HEK293T (cell line): ENCODE measurements at regions of chr19 and their contacts with region 1.

Region 1: DNA sequence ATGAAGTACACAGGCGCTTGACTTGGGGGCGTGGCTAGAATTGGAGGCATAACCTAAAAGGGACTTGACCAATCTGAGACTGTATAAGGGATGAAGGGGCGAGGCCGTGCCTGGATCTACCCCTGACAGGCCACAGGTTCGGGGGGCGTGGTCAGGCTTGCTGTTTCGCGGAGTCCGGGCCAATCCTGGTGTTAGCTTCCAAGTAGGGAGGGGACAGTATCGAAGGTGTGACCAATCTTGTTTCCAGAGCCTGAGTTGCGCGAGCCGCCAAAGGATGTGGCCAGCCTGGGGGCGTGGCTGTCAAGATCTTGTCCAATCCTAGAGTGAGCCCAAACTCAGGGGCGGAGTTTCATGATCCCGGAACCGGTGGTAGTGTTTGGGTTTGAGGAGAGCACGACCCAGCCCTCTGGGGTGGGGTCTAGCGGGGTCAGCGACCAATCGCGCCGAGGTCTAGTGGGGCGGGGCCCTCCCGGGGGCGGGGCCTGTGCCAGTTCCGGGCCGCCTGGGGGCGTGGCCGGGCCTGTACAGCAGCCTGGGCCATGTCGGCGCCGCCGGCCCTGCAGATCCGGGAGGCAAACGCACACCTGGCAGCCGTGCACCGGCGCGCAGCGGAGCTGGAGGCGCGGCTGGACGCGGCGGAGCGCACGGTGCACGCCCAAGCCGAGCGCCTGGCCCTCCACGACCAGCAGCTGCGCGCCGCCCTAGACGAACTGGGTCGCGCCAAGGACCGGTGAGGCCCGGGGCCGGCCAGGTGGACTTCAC is at the start of gene VMAC:
- DNase-seq: peak; percentile 96

Region 2: DNA sequence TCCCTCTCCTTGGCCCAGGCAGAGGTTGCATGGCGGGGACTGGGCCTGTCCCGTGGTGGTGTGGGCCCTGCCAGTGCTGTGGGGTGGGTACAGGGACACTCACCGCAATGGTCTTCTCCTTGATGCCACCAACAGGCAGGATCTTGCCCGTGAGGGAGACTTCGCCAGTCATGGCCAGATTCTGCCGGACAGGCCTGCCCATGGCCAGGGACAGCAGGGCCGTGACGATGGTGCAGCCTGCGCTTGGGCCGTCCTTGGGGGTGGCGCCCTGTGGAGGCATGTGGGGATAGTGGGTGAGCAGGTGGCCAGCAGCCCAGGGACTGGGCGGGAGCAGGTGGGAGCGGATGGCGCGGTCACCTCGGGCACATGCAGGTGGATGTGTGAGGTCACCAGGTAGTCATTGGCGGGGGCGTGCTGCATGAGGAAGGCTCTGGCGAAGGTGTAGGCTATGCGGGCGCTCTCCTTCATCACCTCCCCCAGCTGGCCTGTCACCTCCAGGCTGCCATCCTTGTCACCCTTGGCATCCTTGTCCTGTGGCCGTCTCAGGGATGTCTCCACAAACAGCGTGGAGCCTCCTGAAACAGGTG is 211.2 kb before region 1 on chr19:
- CTCF ChIA-PET with region 1: no interaction called
- POLR2A ChIA-PET with region 1: no interaction called
- DNase-seq: no peak

Region 3: GRCh38 chr19:5790573-5791520 is 113.7 kb before region 1 on chr19 and contains the start of gene DUS3L:
- CTCF ChIA-PET with region 1: no interaction called
- POLR2A ChIA-PET with region 1: interaction called, 12 read pairs
- DNase-seq: peak; percentile 96

Region 4: GRCh38 chr19:5891938-5892771 is 12.4 kb before region 1 on chr19:
- CTCF ChIA-PET with region 1: interaction called, 3 read pairs
- POLR2A ChIA-PET with region 1: interaction called, 13 read pairs
- DNase-seq: peak; percentile 56